Calu3 (cell line): ENCODE measurements at regions of chr11 and their contacts with region 1.

Region 1: GRCh38 chr11:58059007-58059350 is 28.2 kb downstream of the OR6Q1 start:
- DNase-seq: peak; percentile 47
- H3K4me3 Mint-ChIP-seq: no peak overlapping the region
- H3K27ac Mint-ChIP-seq: peak overlapping the region; percentile 88
- H3K4me1 Mint-ChIP-seq: peaks cover 45% of the 10 kb centered on the region
- H3K27me3 Mint-ChIP-seq: no peaks in the 10 kb centered on the region
- CTCF ChIP-seq: no peak

Region 2: DNA sequence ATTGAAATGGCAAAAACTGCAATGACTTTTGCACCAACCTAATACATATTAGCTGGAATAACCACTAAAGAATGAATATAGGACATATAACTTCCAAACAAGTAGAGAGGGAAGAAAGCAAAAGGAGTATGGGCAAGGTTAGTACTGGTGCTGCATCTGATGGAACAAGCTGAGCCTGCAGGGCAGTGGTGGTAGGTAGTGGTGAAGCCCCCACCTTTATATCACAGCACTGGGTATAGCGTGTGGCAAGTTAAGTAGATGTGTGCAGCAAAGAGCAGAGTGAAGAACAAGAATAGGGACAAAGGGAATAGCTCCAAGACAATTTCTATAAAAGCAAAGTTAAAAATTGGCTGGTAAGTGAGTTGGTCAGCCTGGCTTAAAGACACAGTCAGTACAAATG is 235.1 kb before region 1 on chr11:
- CTCF ChIA-PET with region 1: interaction called, 3 read pairs
- intact Hi-C with region 1: loop called (anchors 5 kb)
- DNase-seq: no peak
- H3K4me3 Mint-ChIP-seq: no peak overlapping the region
- H3K27ac Mint-ChIP-seq: peak overlapping the region; percentile 20
- H3K4me1 Mint-ChIP-seq: no peaks in the 10 kb centered on the region
- H3K27me3 Mint-ChIP-seq: no peaks in the 10 kb centered on the region
- CTCF ChIP-seq: no peak

Region 3: DNA sequence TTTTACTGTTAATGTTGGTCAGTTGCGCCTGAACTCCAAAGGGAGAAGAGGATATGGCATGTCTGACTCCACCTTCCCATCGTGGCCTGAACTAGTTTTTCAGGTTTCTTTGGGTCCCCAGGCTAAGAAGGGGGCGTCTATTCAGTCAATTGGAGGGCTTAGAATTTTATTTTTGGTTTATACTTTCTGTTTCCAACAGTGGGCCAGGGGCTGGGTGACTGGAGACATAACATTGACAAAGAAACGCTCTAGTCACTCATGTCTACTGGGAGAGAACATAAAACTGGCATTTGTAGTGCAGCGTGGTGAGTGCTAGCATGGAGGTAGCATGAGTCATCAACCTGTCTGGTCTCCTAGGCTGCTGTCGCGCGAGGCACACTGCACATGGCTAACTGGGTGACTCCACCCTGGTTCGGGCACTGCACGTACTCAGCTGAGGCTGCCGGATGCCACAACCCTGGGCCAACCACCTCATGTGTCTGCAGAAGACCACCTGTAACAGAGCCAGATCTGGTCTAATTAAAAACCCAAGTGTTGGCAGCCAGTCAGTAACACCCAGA is 155.3 kb before region 1 on chr11:
- CTCF ChIA-PET with region 1: no interaction called
- intact Hi-C with region 1: loop called (anchors 2 kb)
- DNase-seq: peak; percentile 85
- H3K4me3 Mint-ChIP-seq: peak overlapping the region; percentile 63
- H3K27ac Mint-ChIP-seq: peak overlapping the region; percentile 99
- H3K4me1 Mint-ChIP-seq: peaks cover 61% of the 10 kb centered on the region
- H3K27me3 Mint-ChIP-seq: no peaks in the 10 kb centered on the region
- CTCF ChIP-seq: no peak

Region 4: DNA sequence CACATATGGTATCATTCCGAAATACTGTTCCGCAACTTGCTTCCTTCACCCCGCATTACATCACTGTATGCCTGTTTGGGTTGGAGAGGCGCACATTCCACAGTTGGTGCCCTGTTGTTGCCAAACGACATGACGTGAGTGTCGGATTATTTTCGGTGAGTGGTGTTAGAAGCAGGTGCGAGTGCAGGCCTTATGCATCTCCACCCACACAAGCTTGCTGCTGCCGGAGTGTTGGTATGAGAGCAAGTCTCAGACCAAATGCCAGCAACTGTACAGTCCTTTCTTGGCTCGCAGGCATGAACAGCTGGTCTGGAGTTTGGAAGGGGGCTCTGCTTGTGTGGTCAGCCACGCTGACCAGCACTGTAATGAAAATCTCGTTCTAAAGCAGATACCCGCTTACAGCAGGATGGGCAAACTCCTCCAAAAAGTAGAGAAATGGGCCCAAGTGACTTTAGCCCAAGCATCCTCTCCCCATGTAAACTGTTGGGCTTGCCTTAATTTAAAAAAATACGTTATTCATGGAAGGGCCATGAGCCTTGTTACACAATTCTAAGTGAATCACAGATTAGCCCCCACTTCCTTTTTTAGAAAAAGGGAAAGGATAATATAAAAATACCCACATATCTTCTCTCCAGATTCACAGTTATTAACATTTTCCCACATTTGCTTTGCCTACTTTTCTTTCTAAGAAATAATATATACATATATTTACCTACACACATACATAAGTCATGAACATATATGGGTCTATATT is 84.0 kb before region 1 on chr11:
- CTCF ChIA-PET with region 1: no interaction called
- intact Hi-C with region 1: loop called (anchors 5 kb)
- DNase-seq: no peak
- H3K4me3 Mint-ChIP-seq: no peak overlapping the region
- H3K27ac Mint-ChIP-seq: no peak overlapping the region
- H3K4me1 Mint-ChIP-seq: peaks cover 64% of the 10 kb centered on the region
- H3K27me3 Mint-ChIP-seq: no peaks in the 10 kb centered on the region
- CTCF ChIP-seq: no peak

Region 5: GRCh38 chr11:58286249-58286648 is 227.3 kb after region 1 on chr11:
- CTCF ChIA-PET with region 1: interaction called, 6 read pairs
- intact Hi-C with region 1: loop called (anchors 10 kb)
- DNase-seq: peak; percentile 38
- H3K4me3 Mint-ChIP-seq: no peak overlapping the region
- H3K27ac Mint-ChIP-seq: no peak overlapping the region
- H3K4me1 Mint-ChIP-seq: peaks cover 15% of the 10 kb centered on the region
- H3K27me3 Mint-ChIP-seq: no peaks in the 10 kb centered on the region
- CTCF ChIP-seq: peak; percentile 31